GM12878 (cell line): ENCODE measurements at regions of chrX and their contacts with region 1.

Region 1: GRCh38 chrX:10052906-10053625 is 85.9 kb downstream of the CLDN34 start:
- DNase-seq: no peak
- ATAC-seq: peak; percentile 59
- H3K4me3 ChIP-seq: no peak overlapping the region
- H3K27ac ChIP-seq: no peak overlapping the region
- H3K4me1 ChIP-seq: no peaks in the 10 kb centered on the region
- H3K27me3 ChIP-seq: peaks cover 0 to 4% of the 10 kb centered on the region in 2 experiments; a peak in 1 of 4 replicates
- CTCF ChIP-seq: no peak
- EP300 ChIP-seq: no peak
- POLR2A ChIP-seq: no peak
- RAD21 ChIP-seq: no peak; the same call in 1 of the 2 replicates

Region 2: DNA sequence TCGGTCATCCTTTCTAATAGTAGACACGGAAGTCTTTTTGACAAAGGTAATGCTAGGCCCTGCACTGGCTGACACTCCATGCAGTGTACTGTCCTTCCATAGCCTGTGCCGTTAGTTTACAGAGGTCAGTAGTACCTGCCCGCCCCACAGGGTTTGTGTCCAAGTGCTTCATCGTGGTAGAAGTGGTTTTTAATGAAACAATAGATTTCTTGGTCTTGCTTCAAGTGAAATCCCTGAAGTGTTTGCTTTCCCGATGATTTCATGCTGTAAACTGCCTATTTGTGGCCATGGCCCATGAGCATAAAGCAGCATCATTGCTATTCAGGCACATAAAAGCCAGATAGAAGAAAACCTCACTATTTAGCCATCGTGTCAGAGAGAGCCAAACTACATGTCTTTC is 426.7 kb before region 1 on chrX:
- CTCF ChIA-PET with region 1: no interaction called
- POLR2A ChIA-PET with region 1: no interaction called
- RAD21 ChIA-PET with region 1: no interaction called
- SMC1A ChIA-PET with region 1: no interaction called
- in situ Hi-C with region 1: no loop called
- intact Hi-C with region 1: no loop called
- DNase-seq: no peak
- ATAC-seq: no peak
- H3K4me3 ChIP-seq: no peak overlapping the region
- H3K27ac ChIP-seq: no peak overlapping the region
- H3K4me1 ChIP-seq: no peaks in the 10 kb centered on the region
- H3K27me3 ChIP-seq: no peaks in the 10 kb centered on the region
- CTCF ChIP-seq: no peak
- EP300 ChIP-seq: no peak
- POLR2A ChIP-seq: no peak
- RAD21 ChIP-seq: no peak

Region 3: GRCh38 chrX:9816094-9816700 is 236.9 kb before region 1 on chrX:
- CTCF ChIA-PET with region 1: no interaction called
- POLR2A ChIA-PET with region 1: no interaction called
- RAD21 ChIA-PET with region 1: no interaction called
- SMC1A ChIA-PET with region 1: no interaction called
- in situ Hi-C with region 1: no loop called
- intact Hi-C with region 1: no loop called
- DNase-seq: no peak
- ATAC-seq: no peak
- H3K4me3 ChIP-seq: no peak overlapping the region
- H3K27ac ChIP-seq: no peak overlapping the region
- H3K4me1 ChIP-seq: no peaks in the 10 kb centered on the region
- H3K27me3 ChIP-seq: no peaks in the 10 kb centered on the region
- CTCF ChIP-seq: no peak
- EP300 ChIP-seq: no peak
- POLR2A ChIP-seq: no peak
- RAD21 ChIP-seq: no peak

Region 4: DNA sequence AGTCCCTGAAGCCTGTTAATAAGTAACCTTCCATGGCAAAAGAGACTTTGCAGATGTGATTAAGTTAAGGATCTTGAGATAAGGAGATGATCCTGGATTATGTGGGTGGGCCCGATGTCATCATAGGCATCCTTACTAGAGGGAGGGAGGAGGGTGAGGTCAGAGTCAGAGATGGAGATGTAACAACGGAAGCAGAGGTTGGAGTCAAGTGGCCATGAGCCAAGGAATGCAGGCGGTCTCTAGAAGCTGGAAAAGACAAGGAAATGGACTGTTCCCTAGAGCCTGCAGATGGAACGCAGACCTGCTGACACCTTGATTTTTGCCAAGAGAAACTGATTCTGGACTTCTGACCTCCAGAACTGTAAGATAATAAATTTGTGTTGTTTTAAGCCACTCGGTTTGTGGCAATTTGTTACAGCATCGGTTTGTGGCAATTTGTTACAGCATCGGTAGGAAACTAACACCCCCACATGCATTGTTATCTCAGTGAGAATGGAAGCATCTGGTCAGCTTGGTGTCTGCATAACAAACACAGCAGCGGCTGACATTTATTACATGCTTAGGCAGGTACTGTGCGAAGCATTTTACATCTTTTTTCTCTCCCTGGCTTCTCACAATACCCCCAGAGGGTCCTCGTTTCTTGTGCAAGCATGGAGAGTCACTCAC is 30.4 kb before region 1 on chrX:
- CTCF ChIA-PET with region 1: interaction called, 3 read pairs
- POLR2A ChIA-PET with region 1: no interaction called
- RAD21 ChIA-PET with region 1: interaction called, 12 read pairs
- SMC1A ChIA-PET with region 1: interaction called, 4 read pairs
- in situ Hi-C with region 1: no loop called
- intact Hi-C with region 1: loop called (anchors 5 kb)
- DNase-seq: no peak
- ATAC-seq: no peak
- H3K4me3 ChIP-seq: no peak overlapping the region
- H3K27ac ChIP-seq: no peak overlapping the region
- H3K4me1 ChIP-seq: no peaks in the 10 kb centered on the region
- H3K27me3 ChIP-seq: no peaks in the 10 kb centered on the region
- CTCF ChIP-seq: no peak
- EP300 ChIP-seq: no peak
- POLR2A ChIP-seq: no peak
- RAD21 ChIP-seq: no peak

Region 5: GRCh38 chrX:10156199-10157031 is 103.3 kb after region 1 on chrX and contains the start of gene CLCN4:
- CTCF ChIA-PET with region 1: no interaction called
- POLR2A ChIA-PET with region 1: no interaction called
- RAD21 ChIA-PET with region 1: no interaction called
- SMC1A ChIA-PET with region 1: no interaction called
- in situ Hi-C with region 1: no loop called
- intact Hi-C with region 1: no loop called
- DNase-seq: no peak
- ATAC-seq: peak; percentile 87
- H3K4me3 ChIP-seq: peak within 1 kb of the TSS; percentile 41; the same call in 1 of the 2 replicates
- H3K27ac ChIP-seq: no peak within 1 kb of the TSS
- H3K4me1 ChIP-seq: no peaks in the 10 kb centered on the region; the same call in 1 of the 2 replicates
- H3K27me3 ChIP-seq: peaks cover 2 to 15% of the 10 kb centered on the region in 2 experiments
- CTCF ChIP-seq: no peak
- EP300 ChIP-seq: no peak
- POLR2A ChIP-seq: no peak
- RAD21 ChIP-seq: no peak
- polyA plus RNA-seq, gene CLCN4: 0.90 to 1.1 TPM